Body of pancreas (tissue), 4 donors: ENCODE measurements at regions of chr2 and their contacts with region 1.

Region 1: GRCh38 chr2:30711646-30712085 is 95.6 kb downstream of the CAPN13 start:
- DNase-seq: peak; percentile 90 to 95 (median 93)
- ATAC-seq: peak; percentile 84
- H3K4me3 ChIP-seq: no peak overlapping the region
- H3K27ac ChIP-seq: no peak overlapping the region
- H3K4me1 ChIP-seq: peaks cover 7% of the 10 kb centered on the region
- H3K27me3 ChIP-seq: no peaks in the 10 kb centered on the region
- CTCF ChIP-seq: peak; percentile 96 to 100 (median 100)
- POLR2A ChIP-seq: no peak

Region 2: DNA sequence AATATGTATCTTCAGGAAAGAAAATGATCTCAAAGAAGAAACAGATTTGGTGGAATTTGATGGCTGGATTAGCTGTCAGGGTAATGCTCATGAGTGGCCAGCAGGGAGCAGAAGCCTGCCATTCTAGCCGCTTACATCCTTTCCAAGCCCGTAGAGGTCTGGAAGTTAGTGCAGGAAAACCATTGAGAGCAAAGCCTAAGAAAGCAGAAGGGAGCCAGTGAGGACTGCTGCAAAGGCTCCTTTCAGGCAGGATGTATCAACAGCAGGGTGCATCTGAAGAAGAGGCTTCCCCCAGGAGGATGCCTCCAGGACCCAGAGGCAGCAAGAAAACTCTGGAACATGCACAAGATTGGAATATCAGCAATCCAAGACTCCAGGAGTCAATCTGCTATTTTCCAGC is 503.2 kb before region 1 on chr2:
- intact Hi-C with region 1: loop called (anchors 5 kb)
- DNase-seq: peak; percentile 67 to 74 (median 71)
- ATAC-seq: peak; percentile 94
- H3K4me3 ChIP-seq: no peak overlapping the region
- H3K27ac ChIP-seq: no peak overlapping the region
- H3K4me1 ChIP-seq: no peaks in the 10 kb centered on the region
- H3K27me3 ChIP-seq: no peaks in the 10 kb centered on the region
- CTCF ChIP-seq: peak; percentile 84 to 95 (median 91)
- POLR2A ChIP-seq: no peak

Region 3: DNA sequence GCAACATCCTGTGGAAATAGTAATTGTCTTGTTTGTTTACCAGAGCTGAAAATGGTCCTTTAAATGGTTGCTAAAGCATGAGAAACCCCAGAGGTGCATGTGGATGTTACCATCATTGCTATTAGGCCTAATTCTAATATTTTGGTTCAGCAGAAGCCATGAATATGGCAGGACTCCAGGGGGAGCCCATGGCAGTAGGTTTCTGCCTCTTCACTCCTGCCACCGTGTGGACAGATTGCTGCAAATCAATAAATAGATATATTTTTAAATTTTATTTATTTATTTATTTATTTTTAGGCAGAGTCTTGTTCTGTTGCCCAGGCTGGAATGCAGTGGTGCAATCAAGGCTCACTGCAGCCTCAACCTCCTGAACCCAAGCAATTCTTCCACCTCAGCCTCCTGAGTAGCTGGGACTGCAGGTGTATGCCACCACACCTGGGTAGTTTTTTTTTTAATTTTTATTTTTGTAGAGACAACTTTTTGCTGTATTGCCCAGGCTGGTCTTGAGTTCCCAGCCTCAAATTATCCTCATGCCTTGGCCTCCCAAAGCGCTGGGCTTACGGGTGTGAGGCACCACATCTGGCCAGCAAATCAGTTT is 150.5 kb after region 1 on chr2:
- intact Hi-C with region 1: loop called (anchors 10 kb)
- DNase-seq: peak; percentile 64 to 83 (median 76)
- ATAC-seq: peak; percentile 30
- H3K4me3 ChIP-seq: no peak overlapping the region
- H3K27ac ChIP-seq: no peak overlapping the region
- H3K4me1 ChIP-seq: no peaks in the 10 kb centered on the region
- H3K27me3 ChIP-seq: no peaks in the 10 kb centered on the region
- CTCF ChIP-seq: peak; percentile 38 to 76 (median 59)
- POLR2A ChIP-seq: no peak

Region 4: DNA sequence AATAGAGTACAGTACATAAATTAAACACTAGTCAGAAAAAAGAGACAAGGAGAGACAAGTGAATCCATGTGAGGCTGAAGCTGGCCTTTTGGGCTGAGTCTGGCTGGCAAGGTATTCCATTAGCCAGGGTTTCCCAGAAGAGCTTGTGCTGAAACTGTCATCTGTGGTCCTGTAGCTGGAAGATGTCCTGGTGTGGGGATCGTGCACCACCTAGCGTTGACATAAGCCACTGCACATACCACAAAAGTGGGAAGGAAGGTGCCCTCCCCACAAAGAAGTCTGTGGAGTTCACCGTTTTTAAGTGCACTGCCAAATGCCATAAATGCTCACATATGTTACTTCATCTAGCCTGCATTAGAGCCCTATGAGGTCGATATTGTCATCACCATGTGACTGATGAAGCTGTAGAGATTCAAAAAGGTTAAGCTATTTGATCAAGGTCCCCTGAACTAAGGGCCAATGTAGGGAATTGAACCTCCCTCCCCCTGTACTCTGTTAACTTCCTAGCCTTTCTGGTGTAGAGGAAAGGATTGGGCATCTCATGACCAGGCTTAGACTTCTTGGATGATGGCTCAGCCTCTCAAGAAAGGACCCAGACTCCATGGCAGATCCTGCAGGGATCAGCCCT is 458.5 kb after region 1 on chr2:
- intact Hi-C with region 1: loop called (anchors 5 kb)
- DNase-seq: peak; percentile 57 to 63 (median 59)
- ATAC-seq: peak; percentile 78
- H3K4me3 ChIP-seq: no peak overlapping the region
- H3K27ac ChIP-seq: no peak overlapping the region
- H3K4me1 ChIP-seq: no peaks in the 10 kb centered on the region
- H3K27me3 ChIP-seq: no peaks in the 10 kb centered on the region
- CTCF ChIP-seq: peak; percentile 80 to 93 (median 89)
- POLR2A ChIP-seq: no peak

Region 5: GRCh38 chr2:31333527-31334183 is 622.0 kb after region 1 on chr2:
- intact Hi-C with region 1: loop called (anchors 5 kb)
- DNase-seq: peak; percentile 80 to 87 (median 84)
- ATAC-seq: peak; percentile 71
- H3K4me3 ChIP-seq: no peak overlapping the region
- H3K27ac ChIP-seq: no peak overlapping the region
- H3K4me1 ChIP-seq: no peaks in the 10 kb centered on the region
- H3K27me3 ChIP-seq: no peaks in the 10 kb centered on the region
- CTCF ChIP-seq: peak; percentile 74 to 90 (median 89)
- POLR2A ChIP-seq: no peak